Left colon (tissue), 2 donors: ENCODE measurements at regions of chr18 and their contacts with region 1.

Region 1: GRCh38 chr18:76450452-76451395 is 44.3 kb downstream of the ZNF516 start:
- DNase-seq: peak in 1 of 2 donors; percentile 57
- ATAC-seq: peak; percentile 76

Region 2: GRCh38 chr18:76488190-76488589 is 37.5 kb after region 1 on chr18:
- intact Hi-C with region 1: loop called in 1 of 2 experiments (anchors 5 kb)
- DNase-seq: no peak
- ATAC-seq: no peak